ENCODE measurements at regions of chr2 and their contacts with region 1.

Region 1: DNA sequence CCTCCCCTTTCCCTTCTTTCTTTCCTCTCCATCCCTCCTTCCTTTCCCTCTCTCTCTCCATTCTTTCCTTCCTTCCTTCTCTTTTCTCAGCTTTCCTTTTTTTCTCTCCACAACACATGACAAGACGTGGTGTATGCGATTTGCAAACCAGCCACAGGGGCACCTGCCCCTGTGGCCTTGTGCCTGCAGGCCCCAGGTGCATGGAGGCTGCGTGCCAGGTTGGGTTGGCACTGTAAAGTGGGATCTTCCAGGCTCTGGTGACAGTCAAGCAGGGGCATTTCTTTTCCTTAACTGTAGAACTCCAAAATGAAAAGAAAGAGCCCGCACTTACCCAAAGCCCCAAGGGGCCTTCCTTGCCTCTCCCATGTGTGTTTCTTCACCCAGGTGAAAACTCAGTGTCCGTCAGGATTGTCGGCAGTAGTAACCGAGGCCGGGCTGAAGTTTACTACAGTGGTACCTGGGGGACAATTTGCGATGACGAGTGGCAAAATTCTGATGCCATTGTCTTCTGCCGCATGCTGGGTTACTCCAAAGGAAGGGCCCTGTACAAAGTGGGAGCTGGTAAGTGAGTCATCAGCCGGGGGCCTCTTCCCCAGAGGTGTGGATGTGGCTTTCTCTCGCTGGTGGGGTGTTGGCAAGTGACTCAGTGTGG is 50.9 kb downstream of the MARCO start:
- DNase-seq: no peak

Region 2: DNA sequence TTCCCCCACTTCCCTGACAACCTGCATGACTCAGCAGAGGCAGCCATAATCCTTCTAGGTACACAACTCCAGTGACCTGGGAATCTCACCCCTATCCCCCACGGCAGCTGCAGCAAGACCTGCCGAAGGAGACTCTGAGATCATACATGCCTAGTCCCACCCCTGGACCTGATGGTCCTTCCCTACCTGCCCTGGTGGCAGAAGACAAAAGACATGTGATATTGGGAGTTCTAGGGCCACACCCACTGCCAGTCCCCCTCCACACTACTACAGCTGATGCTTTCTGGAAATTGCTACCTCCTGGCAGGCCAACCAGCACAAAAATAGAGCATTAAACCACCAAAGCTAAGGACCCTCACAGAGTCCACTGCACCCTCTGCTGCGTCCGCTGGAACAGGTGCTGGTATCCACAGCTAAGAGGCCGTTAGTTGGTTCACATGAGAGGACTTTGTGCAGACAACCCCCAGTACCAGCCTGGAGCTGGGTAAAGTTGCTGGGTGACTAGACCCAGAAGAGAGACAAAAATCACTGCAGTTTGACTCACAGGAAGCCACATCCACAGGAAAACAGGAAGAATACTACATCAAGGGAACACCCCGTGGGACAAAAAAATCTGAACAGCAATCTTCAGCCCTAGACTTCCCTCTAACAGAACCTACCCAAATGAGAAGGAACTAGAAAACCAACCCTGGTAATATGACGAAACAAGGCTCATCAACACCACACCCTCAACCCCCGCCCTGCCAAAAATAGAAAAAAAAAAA is 38.4 kb before region 1 on chr2:
- intact Hi-C with region 1: loop called in 1 of 2 experiments (anchors 2 kb)
- DNase-seq: no peak